Dorsolateral prefrontal cortex (tissue), 120 donors: ENCODE measurements at regions of chr7 and their contacts with region 1.

Region 1: GRCh38 chr7:116953727-116954442 is 584 bp downstream of the ST7 start:
- DNase-seq: peak in 8 of 10 donors; percentile 36 to 65 (median 44)
- H3K4me3 ChIP-seq: peak overlapping the region; percentile 68 to 98 (median 85)
- H3K27ac ChIP-seq: peak overlapping the region; percentile 80 to 100 (median 95)
- H3K27me3 ChIP-seq: no peaks in the 10 kb centered on the region
- CTCF ChIP-seq: peak in 1 of 56 donors; percentile 14

Region 2: DNA sequence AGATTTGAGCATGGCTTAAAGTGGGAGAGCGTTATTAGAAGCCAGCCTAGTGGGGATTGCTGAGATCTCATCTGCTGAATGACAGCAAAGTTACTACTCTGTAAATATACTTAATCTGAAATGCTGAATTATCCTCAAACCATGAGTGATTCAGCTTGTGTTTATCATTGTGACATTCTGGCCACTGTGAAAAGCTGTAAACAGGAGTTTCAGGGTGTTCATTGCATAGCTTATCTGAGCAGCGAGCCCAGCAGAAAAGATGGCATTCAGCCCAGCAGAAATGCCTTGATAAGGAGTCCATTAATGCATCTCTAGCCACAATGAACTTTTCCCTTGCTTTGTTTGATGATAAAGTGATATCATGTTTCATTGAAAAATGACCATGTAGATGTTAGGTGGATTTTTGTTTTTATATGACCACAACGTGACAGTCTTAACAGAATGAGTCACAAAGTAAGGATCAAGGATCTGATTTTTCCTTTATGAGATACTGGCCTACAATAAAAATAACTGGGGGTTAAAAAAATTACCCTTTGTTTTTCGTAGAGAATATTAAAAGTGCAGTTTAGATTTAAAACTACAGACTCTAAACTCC is 735.7 kb before region 1 on chr7:
- intact Hi-C with region 1: no loop called
- DNase-seq: no peak
- H3K4me3 ChIP-seq: no peak overlapping the region
- H3K27ac ChIP-seq: no peak overlapping the region
- H3K27me3 ChIP-seq: peaks cover 0 to 91% (median 28%) of the 10 kb centered on the region in 45 donors
- CTCF ChIP-seq: no peak

Region 3: GRCh38 chr7:116403265-116403664 is 550.6 kb before region 1 on chr7:
- intact Hi-C with region 1: no loop called
- DNase-seq: no peak
- H3K4me3 ChIP-seq: no peak overlapping the region
- H3K27ac ChIP-seq: no peak overlapping the region
- H3K27me3 ChIP-seq: no peaks in the 10 kb centered on the region
- CTCF ChIP-seq: no peak

Region 4: GRCh38 chr7:116862234-116862950 is 91.5 kb before region 1 on chr7 and contains the start of gene CAPZA2:
- intact Hi-C with region 1: loop called (anchors 1 to 5 kb)
- DNase-seq: peak; percentile 81 to 95 (median 88)
- H3K4me3 ChIP-seq: peak within 1 kb of the TSS; percentile 64 to 99 (median 92)
- H3K27ac ChIP-seq: peak within 1 kb of the TSS; percentile 90 to 100 (median 98)
- H3K27me3 ChIP-seq: no peaks in the 10 kb centered on the region
- CTCF ChIP-seq: peak in 45 of 56 donors; percentile 4 to 59 (median 34)
- total RNA-seq, gene CAPZA2: 89.4 to 257 (median 182) TPM